ENCODE measurements at regions of chr4 and their contacts with region 1.

Region 1: DNA sequence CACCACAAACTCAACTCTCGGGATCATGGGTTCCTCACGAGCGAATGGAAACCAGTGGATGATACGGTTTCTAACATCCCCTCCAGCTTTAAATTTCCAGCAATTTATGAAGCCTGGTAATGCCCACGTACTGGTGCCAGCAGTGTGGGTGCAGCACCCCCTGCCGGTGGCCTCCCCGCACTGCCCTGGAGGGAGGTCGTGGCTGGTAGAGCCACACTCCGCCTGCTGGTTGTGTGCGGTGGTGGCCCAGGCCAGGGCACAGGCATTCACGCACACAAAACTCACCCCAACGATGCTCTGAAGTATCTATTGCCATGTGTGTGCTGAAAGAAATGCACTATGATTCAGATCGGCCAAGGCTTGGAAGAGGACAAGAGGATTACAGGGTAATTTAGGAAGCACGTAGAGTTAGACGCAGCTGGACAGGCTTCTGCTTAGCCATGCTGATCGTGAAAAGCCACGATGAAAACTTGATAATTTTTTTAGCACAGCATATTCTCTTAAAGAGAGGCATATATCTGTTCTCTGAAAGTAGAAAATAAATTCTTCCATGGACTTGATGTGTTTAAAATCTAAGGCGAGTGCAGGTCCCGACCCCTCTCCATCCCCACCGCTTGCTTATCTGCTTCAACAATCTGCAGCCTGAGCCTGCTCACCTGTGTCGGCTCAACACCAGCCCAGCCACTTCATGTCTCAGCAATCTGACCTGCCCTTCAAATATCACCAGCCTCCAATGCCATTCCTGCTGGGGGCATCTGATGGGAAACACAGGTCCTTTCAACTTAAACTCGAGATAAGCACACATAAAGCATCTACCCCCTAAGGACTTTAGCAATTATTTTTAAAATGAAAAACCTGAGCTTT is 59.0 kb downstream of the SCD5 start:
- DNase-seq: peak; percentile 82
- H3K4me3 ChIP-seq: no peak overlapping the region
- H3K27ac ChIP-seq: no peak overlapping the region
- H3K4me1 ChIP-seq: no peaks in the 10 kb centered on the region
- H3K27me3 ChIP-seq: no peaks in the 10 kb centered on the region
- CTCF ChIP-seq: peak; percentile 99 to 100
- POLR2A ChIP-seq: no peak

Region 2: GRCh38 chr4:82462415-82462831 is 277.1 kb before region 1 on chr4:
- CTCF ChIA-PET with region 1: interaction called, 500 read pairs
- POLR2A ChIA-PET with region 1: no interaction called
- dilution Hi-C with region 1: no loop called
- intact Hi-C with region 1: loop called (anchors 1 kb)
- DNase-seq: peak; percentile 86
- H3K4me3 ChIP-seq: no peak overlapping the region
- H3K27ac ChIP-seq: no peak overlapping the region
- H3K4me1 ChIP-seq: no peaks in the 10 kb centered on the region
- H3K27me3 ChIP-seq: no peaks in the 10 kb centered on the region
- CTCF ChIP-seq: peak; percentile 62 to 80
- POLR2A ChIP-seq: no peak

Region 3: DNA sequence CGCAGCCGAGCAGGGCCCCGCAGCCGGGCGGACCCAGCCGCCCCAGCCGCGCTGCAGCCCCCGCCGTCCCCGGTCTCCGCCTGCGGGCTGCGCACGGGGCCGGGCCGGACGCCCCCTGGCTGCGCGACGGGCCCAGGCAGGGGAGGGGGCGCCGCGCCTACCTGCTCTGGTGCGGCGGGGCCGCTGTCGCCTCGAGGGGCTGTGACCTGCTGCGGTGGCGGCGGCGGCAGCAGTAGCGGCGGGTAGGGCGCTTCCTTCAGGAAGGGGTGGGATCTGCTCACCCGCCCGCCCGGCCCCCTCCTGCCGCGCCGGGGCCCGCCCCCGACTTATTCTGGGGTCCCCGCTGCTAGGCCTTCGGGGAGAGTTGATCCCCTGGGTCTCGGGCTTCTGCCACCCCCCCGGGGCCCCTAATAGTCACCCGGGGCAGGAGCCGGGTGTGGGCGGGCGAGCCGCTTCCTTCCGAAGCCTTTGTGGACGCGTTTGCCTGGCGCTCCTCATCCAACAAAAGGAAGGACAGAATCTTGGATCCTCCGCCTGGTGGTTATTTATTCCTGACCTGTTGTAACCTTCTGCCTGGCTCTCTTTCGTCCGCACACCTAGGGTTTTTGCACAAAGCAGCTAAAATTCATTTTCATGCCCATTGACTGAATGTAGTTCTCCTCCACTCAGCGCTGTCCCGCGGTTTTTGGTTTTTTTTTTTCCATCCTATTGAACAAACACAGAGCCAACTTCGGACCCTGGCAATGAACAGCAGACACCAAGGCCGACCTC is 177.6 kb before region 1 on chr4 and contains the start of gene TMEM150C:
- CTCF ChIA-PET with region 1: interaction called, 11 read pairs
- POLR2A ChIA-PET with region 1: no interaction called
- dilution Hi-C with region 1: no loop called
- intact Hi-C with region 1: loop called (anchors 1 kb)
- DNase-seq: peak; percentile 26
- H3K4me3 ChIP-seq: peak within 1 kb of the TSS; percentile 58 to 81 (median 75)
- H3K27ac ChIP-seq: no peak within 1 kb of the TSS
- H3K4me1 ChIP-seq: peaks cover 4% of the 10 kb centered on the region
- H3K27me3 ChIP-seq: peaks cover 0 to 10% of the 10 kb centered on the region in 2 experiments
- CTCF ChIP-seq: no peak
- POLR2A ChIP-seq: no peak
- total RNA-seq, gene TMEM150C: 6.5 and 6.6 TPM in 2 replicates

Region 4: GRCh38 chr4:82667761-82668505 is 71.6 kb before region 1 on chr4:
- CTCF ChIA-PET with region 1: interaction called, 23 read pairs
- POLR2A ChIA-PET with region 1: no interaction called
- dilution Hi-C with region 1: no loop called
- intact Hi-C with region 1: no loop called
- DNase-seq: no peak
- H3K4me3 ChIP-seq: no peak overlapping the region
- H3K27ac ChIP-seq: no peak overlapping the region
- H3K4me1 ChIP-seq: no peaks in the 10 kb centered on the region
- H3K27me3 ChIP-seq: no peaks in the 10 kb centered on the region
- CTCF ChIP-seq: no peak
- POLR2A ChIP-seq: no peak

Region 5: DNA sequence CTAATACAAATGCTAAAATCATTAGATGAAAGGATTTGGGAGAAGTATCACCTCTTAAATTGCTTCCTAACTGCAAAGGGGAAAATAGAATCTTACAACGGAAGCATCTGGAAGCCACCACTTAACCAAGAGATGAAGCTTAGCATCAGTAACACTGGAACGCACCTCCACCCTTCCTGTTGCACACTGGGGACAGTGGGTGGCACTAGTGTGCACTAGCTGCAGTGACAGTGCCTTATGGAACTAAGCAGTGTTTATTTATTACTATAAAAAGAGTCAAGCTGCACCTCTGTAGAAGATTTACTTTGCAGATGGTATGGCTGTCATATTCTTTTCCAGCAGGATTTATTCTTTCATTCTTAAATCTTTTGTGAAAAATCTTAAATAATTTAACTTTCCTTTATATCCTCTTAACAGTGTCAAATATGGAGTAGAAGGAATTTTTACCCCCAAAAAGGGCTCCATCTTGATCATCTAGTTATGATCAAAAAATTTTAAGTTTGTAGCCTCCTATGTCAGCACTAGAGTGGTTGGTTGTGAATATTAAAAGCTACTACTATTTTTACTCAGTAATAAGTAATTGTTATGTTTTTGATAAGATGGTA is 17.6 kb before region 1 on chr4:
- CTCF ChIA-PET with region 1: interaction called, 34 read pairs
- POLR2A ChIA-PET with region 1: no interaction called
- dilution Hi-C with region 1: no loop called
- intact Hi-C with region 1: no loop called
- DNase-seq: peak; percentile 38
- H3K4me3 ChIP-seq: no peak overlapping the region
- H3K27ac ChIP-seq: no peak overlapping the region
- H3K4me1 ChIP-seq: peaks cover 5% of the 10 kb centered on the region
- H3K27me3 ChIP-seq: no peaks in the 10 kb centered on the region
- CTCF ChIP-seq: peak; percentile 16 to 44
- POLR2A ChIP-seq: no peak

Region 6: DNA sequence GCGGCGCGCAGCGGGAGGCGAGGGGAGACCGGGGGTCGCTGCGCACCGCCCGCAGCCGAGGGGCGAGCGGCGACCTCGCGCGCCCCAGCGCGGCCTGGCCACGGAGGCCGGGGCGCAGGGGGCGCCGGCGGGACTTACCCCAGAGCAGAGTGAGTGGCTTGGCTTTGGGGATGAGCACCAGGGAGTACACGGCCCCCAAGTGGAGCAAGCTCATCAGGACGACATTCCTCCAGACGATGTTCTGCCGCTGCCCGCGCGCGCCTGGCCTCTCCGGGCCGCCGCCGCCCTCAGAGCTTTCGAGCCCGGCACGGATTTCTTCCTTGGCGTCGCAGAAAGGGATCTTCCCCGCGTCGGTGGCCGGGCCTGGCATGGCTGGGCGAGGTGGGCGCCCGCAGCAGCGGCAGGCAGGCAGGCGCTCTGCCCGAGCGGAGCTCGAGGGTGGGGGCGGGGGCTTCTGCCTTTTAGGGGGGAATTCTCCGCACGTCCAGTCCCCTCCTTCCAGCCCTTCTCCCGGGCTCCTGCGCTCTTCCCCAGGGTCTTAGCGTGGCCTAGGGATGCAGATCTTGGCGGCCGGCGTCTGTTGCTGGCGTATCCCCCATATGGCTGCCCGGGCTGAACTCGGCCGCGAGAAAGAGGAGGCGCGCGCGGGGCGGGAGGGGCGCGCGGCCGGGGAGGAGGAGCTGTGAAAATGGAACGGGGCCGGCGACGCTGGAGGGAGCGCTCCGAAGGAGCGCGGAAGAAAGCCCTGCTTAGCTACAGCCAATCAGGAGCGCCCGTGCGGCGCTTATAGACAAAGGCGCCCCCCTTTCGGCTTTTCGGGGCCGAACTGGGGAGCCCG is 58.8 kb after region 1 on chr4 and contains the start of gene SCD5:
- CTCF ChIA-PET with region 1: interaction called, 106 read pairs
- POLR2A ChIA-PET with region 1: no interaction called
- dilution Hi-C with region 1: no loop called
- intact Hi-C with region 1: loop called (anchors 1 kb)
- DNase-seq: peak; percentile 76
- H3K4me3 ChIP-seq: peak within 1 kb of the TSS; percentile 79 to 91 (median 82)
- H3K27ac ChIP-seq: peak within 1 kb of the TSS; percentile 8
- H3K4me1 ChIP-seq: peaks cover 18% of the 10 kb centered on the region
- H3K27me3 ChIP-seq: peaks cover 0 to 3% of the 10 kb centered on the region in 2 experiments
- CTCF ChIP-seq: no peak
- POLR2A ChIP-seq: no peak
- total RNA-seq, gene SCD5: 35.8 and 38.4 TPM in 2 replicates